Dendritic cell treated with granulocyte-macrophage colony-stimulating factor and Interleukin-4, amounts not matched to agents 40 ng/mL and 50 ng/mL, for 4 days (primary cell): ENCODE measurements at regions of chr18 and their contacts with region 1.

Region 1: DNA sequence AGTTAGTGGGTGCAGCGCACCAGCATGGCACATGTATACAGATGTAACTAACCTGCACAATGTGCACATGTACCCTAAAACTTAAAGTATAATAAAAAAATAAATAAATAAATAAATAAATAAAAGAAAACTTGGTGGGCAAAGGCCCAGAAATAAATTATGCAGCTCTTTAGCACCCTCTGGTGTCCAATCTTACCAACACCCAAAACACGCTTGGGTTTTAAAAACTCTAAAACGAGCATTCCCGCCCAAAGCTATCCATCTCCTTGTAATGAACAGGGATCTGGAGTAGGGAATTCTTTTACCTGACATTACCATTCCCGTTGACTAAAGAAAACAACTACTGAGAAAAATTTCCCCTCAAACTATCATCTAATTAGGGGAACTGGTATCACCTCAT is 2005.9 kb upstream of the CELF4 start:
- H3K4me3 Mint-ChIP-seq: no peak overlapping the region
- H3K27ac Mint-ChIP-seq: no peak overlapping the region
- H3K4me1 Mint-ChIP-seq: no peaks in the 10 kb centered on the region
- H3K27me3 Mint-ChIP-seq: no peaks in the 10 kb centered on the region

Region 2: GRCh38 chr18:37778417-37779165 is 1792.9 kb before region 1 on chr18:
- intact Hi-C with region 1: loop called (anchors 5 kb)
- H3K4me3 Mint-ChIP-seq: no peak overlapping the region
- H3K27ac Mint-ChIP-seq: no peak overlapping the region
- H3K4me1 Mint-ChIP-seq: no peaks in the 10 kb centered on the region
- H3K27me3 Mint-ChIP-seq: no peaks in the 10 kb centered on the region

Region 3: DNA sequence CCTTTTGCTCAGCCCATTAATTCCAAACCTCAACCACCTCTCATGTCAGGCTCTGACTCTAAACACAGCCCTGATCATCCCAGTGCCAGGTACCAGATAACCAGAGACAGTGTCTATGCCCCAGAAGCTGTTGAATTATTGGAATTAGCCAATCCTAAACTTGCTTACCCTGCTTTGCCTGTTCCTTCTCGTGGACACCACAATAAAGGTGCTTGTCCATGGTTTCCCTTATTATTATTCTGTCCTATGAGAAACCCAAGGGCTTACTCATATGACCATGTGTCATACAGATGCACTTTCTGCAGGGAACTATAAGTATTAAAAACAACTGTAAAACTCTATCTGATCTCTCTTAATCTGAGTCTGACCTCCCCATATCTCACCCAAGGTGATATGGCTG is 189.8 kb after region 1 on chr18:
- intact Hi-C with region 1: no loop called
- H3K4me3 Mint-ChIP-seq: no peak overlapping the region
- H3K27ac Mint-ChIP-seq: no peak overlapping the region
- H3K4me1 Mint-ChIP-seq: no peaks in the 10 kb centered on the region
- H3K27me3 Mint-ChIP-seq: no peaks in the 10 kb centered on the region